ENCODE measurements at regions of chr12 and their contacts with region 1.

Region 1: GRCh38 chr12:22018860-22019259 is 27.2 kb upstream of the CMAS start:
- DNase-seq: peak; percentile 30
- ATAC-seq: no peak
- H3K4me3 ChIP-seq: no peak overlapping the region
- H3K27ac ChIP-seq: no peak overlapping the region
- H3K4me1 ChIP-seq: peaks cover 12% of the 10 kb centered on the region; the same call in 1 of the 2 replicates
- H3K27me3 ChIP-seq: no peaks in the 10 kb centered on the region
- CTCF ChIP-seq: peak; percentile 67

Region 2: GRCh38 chr12:21607701-21608100 is 411.2 kb before region 1 on chr12:
- CTCF ChIA-PET with region 1: no interaction called
- POLR2A ChIA-PET with region 1: no interaction called
- intact Hi-C with region 1: loop called (anchors 10 kb)
- DNase-seq: peak; percentile 25
- ATAC-seq: peak; percentile 33; the same call in 1 of the 2 replicates
- H3K4me3 ChIP-seq: no peak overlapping the region
- H3K27ac ChIP-seq: no peak overlapping the region
- H3K4me1 ChIP-seq: no peaks in the 10 kb centered on the region
- H3K27me3 ChIP-seq: no peaks in the 10 kb centered on the region
- CTCF ChIP-seq: peak; percentile 43; the same call in 1 of the 2 replicates

Region 3: GRCh38 chr12:21665816-21666215 is 353.0 kb before region 1 on chr12:
- CTCF ChIA-PET with region 1: no interaction called
- POLR2A ChIA-PET with region 1: interaction called, 13 read pairs
- intact Hi-C with region 1: no loop called
- DNase-seq: no peak
- ATAC-seq: no peak
- H3K4me3 ChIP-seq: no peak overlapping the region
- H3K27ac ChIP-seq: no peak overlapping the region
- H3K4me1 ChIP-seq: no peaks in the 10 kb centered on the region
- H3K27me3 ChIP-seq: peaks cover 26% of the 10 kb centered on the region
- CTCF ChIP-seq: no peak

Region 4: GRCh38 chr12:22046090-22046967 is 27.5 kb after region 1 on chr12 and contains the start of gene CMAS:
- CTCF ChIA-PET with region 1: no interaction called
- POLR2A ChIA-PET with region 1: no interaction called
- intact Hi-C with region 1: loop called (anchors 2 kb)
- DNase-seq: peak; percentile 61
- ATAC-seq: peak; percentile 71
- H3K4me3 ChIP-seq: peak within 1 kb of the TSS; percentile 94
- H3K27ac ChIP-seq: peak within 1 kb of the TSS; percentile 61
- H3K4me1 ChIP-seq: peaks cover 24% of the 10 kb centered on the region
- H3K27me3 ChIP-seq: no peaks in the 10 kb centered on the region
- CTCF ChIP-seq: no peak
- total RNA-seq, gene CMAS: 25.0 and 47.6 TPM in 2 replicates

Measured in PC-3 (cell line).